ENCODE measurements at regions of chr2 and their contacts with region 1.

Region 1: GRCh38 chr2:130873700-130874346 is 37.1 kb downstream of the ARHGEF4 start:
- DNase-seq: peak; percentile 47 to 70 (median 58)
- H3K4me3 ChIP-seq: no peak overlapping the region
- H3K27ac ChIP-seq: no peak overlapping the region
- H3K4me1 ChIP-seq: no peaks in the 10 kb centered on the region
- H3K27me3 ChIP-seq: peaks cover 0 to 36% (median 4%) of the 10 kb centered on the region in 5 experiments

Region 2: DNA sequence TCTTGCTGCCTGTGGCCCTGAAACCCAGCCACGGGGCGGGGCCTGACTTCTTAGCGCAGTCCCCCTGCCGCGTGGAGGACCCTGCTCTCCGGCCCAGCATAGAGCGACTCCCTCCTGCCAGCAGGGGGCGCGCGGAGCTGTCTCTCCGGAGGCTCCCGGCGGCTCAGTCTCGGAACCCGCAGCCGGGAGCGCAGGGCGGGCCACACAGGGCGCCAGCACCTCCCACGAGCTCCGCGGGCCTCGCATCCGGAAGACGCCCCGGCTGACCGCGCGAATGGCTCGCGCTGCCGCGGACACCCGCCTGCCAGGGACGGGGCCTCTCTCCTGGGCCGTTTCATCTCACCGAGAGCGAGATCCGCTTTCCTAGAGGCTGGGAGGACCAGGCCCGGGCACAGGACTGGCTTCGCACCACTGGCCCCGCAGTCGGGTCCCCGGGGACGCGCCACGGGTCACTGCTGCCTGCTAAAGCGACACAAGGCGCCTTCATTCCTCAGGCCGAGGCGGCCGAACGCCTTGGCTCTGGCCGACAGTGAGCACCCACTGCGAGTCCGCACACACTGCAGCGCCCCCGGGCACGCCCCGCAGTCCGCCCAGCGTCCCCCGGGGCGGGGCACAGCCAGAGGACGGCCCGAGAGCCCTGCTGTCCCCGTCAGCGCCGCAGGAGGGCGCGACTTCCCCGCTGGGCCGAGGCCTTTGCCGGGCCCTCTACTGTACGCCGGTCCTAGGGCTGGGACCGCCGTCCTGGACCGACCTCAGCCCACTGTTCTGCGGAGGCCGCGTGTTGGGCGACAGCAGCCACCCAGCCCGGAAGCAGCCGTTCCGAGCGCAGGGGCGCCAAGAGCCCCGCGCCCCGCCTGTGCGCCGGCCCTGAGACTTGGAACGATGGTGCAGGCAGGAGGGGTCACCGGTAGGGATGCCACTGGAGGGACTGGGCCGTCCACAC is 76.1 kb before region 1 on chr2:
- CTCF ChIA-PET with region 1: interaction called, 112 read pairs
- POLR2A ChIA-PET with region 1: no interaction called
- DNase-seq: peak; percentile 83 to 87 (median 85)
- H3K4me3 ChIP-seq: peak overlapping the region; percentile 39 to 85 (median 76)
- H3K27ac ChIP-seq: no peak overlapping the region
- H3K4me1 ChIP-seq: peaks cover 0 to 17% (median 14%) of the 10 kb centered on the region in 4 experiments
- H3K27me3 ChIP-seq: peaks cover 4 to 40% (median 10%) of the 10 kb centered on the region in 5 experiments

Region 3: GRCh38 chr2:130836501-130837174 is 37.2 kb before region 1 on chr2 and contains the start of gene ARHGEF4:
- CTCF ChIA-PET with region 1: no interaction called
- POLR2A ChIA-PET with region 1: no interaction called
- DNase-seq: peak in 2 of 3 donors; percentile 29 to 37
- H3K4me3 ChIP-seq: peak within 1 kb of the TSS in 3 of 7 experiments; percentile 19 to 54 (median 43)
- H3K27ac ChIP-seq: no peak within 1 kb of the TSS
- H3K4me1 ChIP-seq: peaks cover 0 to 7% (median 3%) of the 10 kb centered on the region in 4 experiments
- H3K27me3 ChIP-seq: peaks cover 0 to 86% (median 28%) of the 10 kb centered on the region in 5 experiments

Region 4: GRCh38 chr2:130850788-130851623 is 22.8 kb before region 1 on chr2:
- CTCF ChIA-PET with region 1: interaction called, 22 read pairs
- POLR2A ChIA-PET with region 1: no interaction called
- DNase-seq: no peak
- H3K4me3 ChIP-seq: no peak overlapping the region
- H3K27ac ChIP-seq: no peak overlapping the region
- H3K4me1 ChIP-seq: no peaks in the 10 kb centered on the region
- H3K27me3 ChIP-seq: peaks cover 0 to 14% (median 0%) of the 10 kb centered on the region in 5 experiments

Region 5: GRCh38 chr2:130884503-130884902 is 10.7 kb after region 1 on chr2:
- CTCF ChIA-PET with region 1: interaction called, 26 read pairs
- POLR2A ChIA-PET with region 1: no interaction called
- DNase-seq: no peak
- H3K4me3 ChIP-seq: no peak overlapping the region
- H3K27ac ChIP-seq: no peak overlapping the region
- H3K4me1 ChIP-seq: no peaks in the 10 kb centered on the region
- H3K27me3 ChIP-seq: peaks cover 0 to 6% (median 2%) of the 10 kb centered on the region in 5 experiments

Measured in common myeloid progenitor, CD34-positive (primary cell).